Heart right ventricle (tissue), 16 donors: ENCODE measurements at regions of chr5 and their contacts with region 1.

Region 1: DNA sequence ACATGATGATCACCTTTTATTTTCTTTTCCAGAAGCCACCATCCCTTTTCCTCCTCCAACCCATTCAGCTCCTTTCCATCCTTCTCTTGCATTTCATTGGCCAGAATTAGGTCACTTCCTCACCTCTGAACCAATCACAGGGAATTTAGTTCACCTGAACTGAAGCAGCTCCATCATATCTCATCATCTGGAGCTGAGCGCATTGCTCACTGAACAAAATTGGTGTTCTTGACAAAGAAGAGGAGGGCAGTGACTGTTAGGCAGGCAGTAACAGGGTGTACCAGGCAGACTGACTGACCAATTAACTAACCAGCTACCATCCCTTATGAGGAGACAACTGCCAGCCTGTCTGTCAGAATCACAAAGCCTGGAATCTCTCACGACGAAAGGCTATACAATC is 1.8 kb upstream of the ZNF354A start:
- DNase-seq: no peak
- ATAC-seq: no peak
- H3K4me3 ChIP-seq: no peak overlapping the region
- H3K27ac ChIP-seq: no peak overlapping the region
- H3K4me1 ChIP-seq: peaks cover 0 to 13% (median 7%) of the 10 kb centered on the region in 9 donors
- H3K27me3 ChIP-seq: no peaks in the 10 kb centered on the region
- CTCF ChIP-seq: no peak

Region 2: GRCh38 chr5:178626484-178627258 is 105.6 kb before region 1 on chr5 and contains the start of gene CLK4:
- intact Hi-C with region 1: loop called in 5 of 10 experiments (anchors 1 to 10 kb)
- DNase-seq: peak; percentile 96 to 98
- ATAC-seq: peak; percentile 97 to 99 (median 98)
- H3K4me3 ChIP-seq: peak within 1 kb of the TSS; percentile 75 to 98 (median 92)
- H3K27ac ChIP-seq: peak within 1 kb of the TSS; percentile 94 to 99 (median 95)
- H3K4me1 ChIP-seq: peaks cover 9 to 40% (median 36%) of the 10 kb centered on the region in 9 donors
- H3K27me3 ChIP-seq: no peaks in the 10 kb centered on the region
- CTCF ChIP-seq: no peak
- total RNA-seq, gene CLK4: 12.3 to 25.7 (median 15.5) TPM

Region 3: GRCh38 chr5:178838695-178839685 is 106.7 kb after region 1 on chr5:
- intact Hi-C with region 1: loop called in 3 of 10 experiments (anchors 10 kb)
- DNase-seq: peak in 1 of 2 donors; percentile 63
- ATAC-seq: peak; percentile 73 to 93 (median 86)
- H3K4me3 ChIP-seq: no peak overlapping the region
- H3K27ac ChIP-seq: no peak overlapping the region
- H3K4me1 ChIP-seq: no peaks in the 10 kb centered on the region
- H3K27me3 ChIP-seq: peaks cover 0 to 5% (median 0%) of the 10 kb centered on the region in 7 donors
- CTCF ChIP-seq: peak in 7 of 9 donors; percentile 45 to 79 (median 65)

Region 4: GRCh38 chr5:178859625-178860531 is 127.6 kb after region 1 on chr5 and contains the start of gene ZNF354B:
- intact Hi-C with region 1: loop called in 7 of 10 experiments (anchors 1 to 10 kb)
- DNase-seq: peak; percentile 88 to 92
- ATAC-seq: peak; percentile 97 to 99 (median 98)
- H3K4me3 ChIP-seq: peak within 1 kb of the TSS; percentile 48 to 96 (median 84)
- H3K27ac ChIP-seq: peak within 1 kb of the TSS; percentile 56 to 91 (median 89)
- H3K4me1 ChIP-seq: peaks cover 0 to 29% (median 18%) of the 10 kb centered on the region in 9 donors
- H3K27me3 ChIP-seq: no peaks in the 10 kb centered on the region
- CTCF ChIP-seq: peak in 5 of 9 donors; percentile 6 to 42 (median 26)
- total RNA-seq, gene ZNF354B: 5.5 to 10.9 (median 7.4) TPM

Region 5: GRCh38 chr5:179008661-179009060 is 276.4 kb after region 1 on chr5:
- intact Hi-C with region 1: no loop called
- DNase-seq: no peak
- ATAC-seq: no peak
- H3K4me3 ChIP-seq: no peak overlapping the region
- H3K27ac ChIP-seq: no peak overlapping the region
- H3K4me1 ChIP-seq: no peaks in the 10 kb centered on the region
- H3K27me3 ChIP-seq: no peaks in the 10 kb centered on the region
- CTCF ChIP-seq: peak in 1 of 9 donors; percentile 25

Region 6: GRCh38 chr5:179023528-179024430 is 291.5 kb after region 1 on chr5 and contains the start of gene ZNF879:
- intact Hi-C with region 1: loop called in 1 of 10 experiments (anchors 5 kb)
- DNase-seq: peak; percentile 94 to 95
- ATAC-seq: peak; percentile 97 to 99 (median 99)
- H3K4me3 ChIP-seq: peak within 1 kb of the TSS; percentile 22 to 96 (median 74)
- H3K27ac ChIP-seq: peak within 1 kb of the TSS; percentile 80 to 94 (median 88)
- H3K4me1 ChIP-seq: peaks cover 0 to 18% (median 9%) of the 10 kb centered on the region in 9 donors
- H3K27me3 ChIP-seq: no peaks in the 10 kb centered on the region
- CTCF ChIP-seq: no peak
- total RNA-seq, gene ZNF879: 1.8 to 4.5 (median 3.6) TPM

Region 7: GRCh38 chr5:179060116-179061008 is 328.1 kb after region 1 on chr5 and contains the start of gene ZNF354C:
- intact Hi-C with region 1: loop called in 6 of 10 experiments (anchors 1 to 10 kb)
- DNase-seq: peak; percentile 91 to 93
- ATAC-seq: peak; percentile 98 to 100 (median 99)
- H3K4me3 ChIP-seq: peak within 1 kb of the TSS; percentile 60 to 85 (median 80)
- H3K27ac ChIP-seq: peak within 1 kb of the TSS; percentile 31 to 89 (median 80)
- H3K4me1 ChIP-seq: peaks cover 5 to 20% (median 11%) of the 10 kb centered on the region in 9 donors
- H3K27me3 ChIP-seq: no peaks in the 10 kb centered on the region
- CTCF ChIP-seq: peak in 2 of 9 donors; percentile 10 to 12
- total RNA-seq, gene ZNF354C: 3.5 to 5.5 (median 4.2) TPM